MCF 10A (cell line): ENCODE measurements at regions of chr12 and their contacts with region 1.

Region 1: DNA sequence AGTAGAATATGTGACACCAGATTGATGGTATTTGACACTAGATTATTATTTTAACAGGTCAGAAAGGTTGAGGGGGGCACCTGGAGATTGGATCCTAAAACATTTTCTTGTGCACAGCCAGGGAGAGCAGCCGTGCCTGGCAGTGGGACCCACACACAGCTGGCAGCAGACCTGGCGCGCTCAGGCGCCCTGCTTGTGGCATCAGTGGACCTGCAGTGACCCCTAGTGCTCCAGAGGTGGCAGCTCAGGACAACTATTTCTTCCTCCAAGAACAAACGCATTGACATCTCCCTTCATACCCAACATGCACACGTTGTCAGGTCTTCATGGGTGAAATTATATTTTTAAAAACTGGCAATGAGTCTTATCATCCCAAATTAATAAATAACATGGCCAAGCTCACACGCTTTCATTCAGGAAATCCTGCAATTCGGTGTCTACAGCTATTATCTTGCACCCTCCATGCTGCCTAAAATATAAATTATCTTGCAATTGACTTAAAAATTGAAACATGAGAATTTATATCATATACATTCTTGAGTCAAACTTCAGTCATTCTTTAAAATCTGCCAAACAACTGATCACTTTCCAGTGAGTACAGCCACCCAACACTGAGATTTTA is 7.7 kb upstream of the TMEM132D start:
- DNase-seq: peak; percentile 65
- H3K4me3 Mint-ChIP-seq: no peak overlapping the region
- H3K27ac Mint-ChIP-seq: no peak overlapping the region
- H3K4me1 Mint-ChIP-seq: peaks cover 4% of the 10 kb centered on the region
- H3K27me3 Mint-ChIP-seq: no peaks in the 10 kb centered on the region
- CTCF ChIP-seq: peak; percentile 80

Region 2: GRCh38 chr12:128783129-128783574 is 1128.4 kb before region 1 on chr12:
- CTCF ChIA-PET with region 1: interaction called, 28 read pairs
- POLR2A ChIA-PET with region 1: no interaction called
- intact Hi-C with region 1: loop called (anchors 1 kb)
- DNase-seq: peak; percentile 20
- H3K4me3 Mint-ChIP-seq: no peak overlapping the region
- H3K27ac Mint-ChIP-seq: no peak overlapping the region
- H3K4me1 Mint-ChIP-seq: peaks cover 8% of the 10 kb centered on the region
- H3K27me3 Mint-ChIP-seq: no peaks in the 10 kb centered on the region
- CTCF ChIP-seq: no peak

Region 3: GRCh38 chr12:129193263-129193871 is 718.2 kb before region 1 on chr12:
- CTCF ChIA-PET with region 1: interaction called, 5 read pairs
- POLR2A ChIA-PET with region 1: no interaction called
- intact Hi-C with region 1: loop called (anchors 2 kb)
- DNase-seq: peak; percentile 36
- H3K4me3 Mint-ChIP-seq: no peak overlapping the region
- H3K27ac Mint-ChIP-seq: no peak overlapping the region
- H3K4me1 Mint-ChIP-seq: no peaks in the 10 kb centered on the region
- H3K27me3 Mint-ChIP-seq: no peaks in the 10 kb centered on the region
- CTCF ChIP-seq: peak; percentile 47

Region 4: DNA sequence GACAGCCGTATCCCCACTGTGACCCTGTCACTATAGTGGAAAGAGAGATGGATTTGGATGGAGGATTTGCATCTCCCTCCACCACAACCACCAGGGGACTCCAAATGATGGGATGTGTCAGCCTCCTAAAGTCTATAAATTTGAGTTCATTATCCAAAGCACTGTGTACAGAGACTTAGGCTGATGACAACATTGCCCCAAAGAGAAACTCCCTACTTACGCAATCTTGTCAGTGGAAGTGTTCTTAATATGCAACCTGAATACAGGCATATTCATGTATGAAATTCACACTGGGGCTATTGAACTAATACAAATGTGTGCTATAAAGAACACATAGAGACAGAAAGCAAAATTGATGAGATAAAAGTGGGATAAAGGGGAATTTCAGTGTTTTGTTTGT is 376.2 kb before region 1 on chr12:
- CTCF ChIA-PET with region 1: no interaction called
- POLR2A ChIA-PET with region 1: no interaction called
- intact Hi-C with region 1: loop called (anchors 1 kb)
- DNase-seq: peak; percentile 72
- H3K4me3 Mint-ChIP-seq: no peak overlapping the region
- H3K27ac Mint-ChIP-seq: peak overlapping the region; percentile 9
- H3K4me1 Mint-ChIP-seq: peaks cover 14% of the 10 kb centered on the region
- H3K27me3 Mint-ChIP-seq: no peaks in the 10 kb centered on the region
- CTCF ChIP-seq: no peak

Region 5: GRCh38 chr12:129868575-129868974 is 43.0 kb before region 1 on chr12:
- CTCF ChIA-PET with region 1: no interaction called
- POLR2A ChIA-PET with region 1: no interaction called
- intact Hi-C with region 1: no loop called
- DNase-seq: peak; percentile 17
- H3K4me3 Mint-ChIP-seq: no peak overlapping the region
- H3K27ac Mint-ChIP-seq: no peak overlapping the region
- H3K4me1 Mint-ChIP-seq: no peaks in the 10 kb centered on the region
- H3K27me3 Mint-ChIP-seq: no peaks in the 10 kb centered on the region
- CTCF ChIP-seq: no peak

Region 6: DNA sequence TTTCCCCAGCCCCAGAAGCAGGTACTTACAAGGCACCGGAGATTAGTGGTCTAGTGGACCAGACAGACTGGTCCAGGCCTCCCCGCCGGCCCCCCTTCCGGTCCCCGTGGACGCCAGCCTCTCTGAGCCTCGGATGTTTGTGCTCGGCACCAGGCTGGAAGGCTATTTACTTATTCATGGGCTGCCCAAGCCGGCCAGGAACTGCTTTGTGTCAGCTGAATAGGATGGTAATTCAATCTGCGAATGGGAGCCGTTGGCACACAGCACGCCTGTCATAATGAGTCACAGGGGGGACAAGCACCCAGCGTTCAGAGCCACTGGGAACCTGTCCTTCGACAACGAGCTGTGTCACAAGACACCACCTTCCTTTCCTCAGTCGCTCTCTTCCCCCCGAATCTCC is 722.2 kb after region 1 on chr12:
- CTCF ChIA-PET with region 1: no interaction called
- POLR2A ChIA-PET with region 1: no interaction called
- intact Hi-C with region 1: no loop called
- DNase-seq: no peak
- H3K4me3 Mint-ChIP-seq: no peak overlapping the region
- H3K27ac Mint-ChIP-seq: no peak overlapping the region
- H3K4me1 Mint-ChIP-seq: no peaks in the 10 kb centered on the region
- H3K27me3 Mint-ChIP-seq: peaks cover 92% of the 10 kb centered on the region
- CTCF ChIP-seq: no peak